GM12878 (cell line): ENCODE measurements at regions of chr12 and their contacts with region 1.

Region 1: DNA sequence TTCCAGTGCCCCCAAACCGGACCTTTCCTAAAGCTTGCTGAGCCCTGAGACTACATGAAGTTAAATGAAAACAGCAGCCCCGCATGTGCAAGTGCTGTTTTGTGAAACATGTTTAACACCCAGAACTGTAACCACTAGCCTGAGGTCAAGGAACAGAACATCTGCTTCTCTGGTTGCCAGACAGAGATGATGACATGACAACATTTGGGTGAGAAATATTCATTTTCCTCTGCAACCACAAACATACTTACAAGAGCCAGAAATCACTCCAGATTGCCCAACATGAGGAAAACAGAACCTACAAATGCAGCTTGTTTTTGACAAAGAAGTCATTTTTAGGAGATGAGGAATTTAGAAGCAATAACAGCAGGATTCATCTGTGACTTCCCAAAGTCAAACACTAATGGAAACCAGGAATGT is 110.4 kb downstream of the BCAT1 start:
- DNase-seq: peak; percentile 84
- ATAC-seq: peak; percentile 72
- H3K4me3 ChIP-seq: peak overlapping the region; percentile 8; the same call in 1 of the 2 replicates
- H3K27ac ChIP-seq: peak overlapping the region; percentile 89
- H3K4me1 ChIP-seq: peaks cover 27% of the 10 kb centered on the region
- H3K27me3 ChIP-seq: no peaks in the 10 kb centered on the region
- CTCF ChIP-seq: no peak
- EP300 ChIP-seq: peak; percentile 87 to 89; a peak in 3 of 4 replicates
- POLR2A ChIP-seq: no peak
- RAD21 ChIP-seq: 0 out of 2 replicates have a peak, but pooled peaks have one; percentile 3

Region 2: GRCh38 chr12:24127919-24128721 is 710.4 kb before region 1 on chr12:
- CTCF ChIA-PET with region 1: no interaction called
- POLR2A ChIA-PET with region 1: no interaction called
- RAD21 ChIA-PET with region 1: no interaction called
- SMC1A ChIA-PET with region 1: no interaction called
- in situ Hi-C with region 1: no loop called
- intact Hi-C with region 1: loop called (anchors 2 kb)
- DNase-seq: peak; percentile 63
- ATAC-seq: peak; percentile 96
- H3K4me3 ChIP-seq: no peak overlapping the region; the same call in 1 of the 2 replicates
- H3K27ac ChIP-seq: no peak overlapping the region
- H3K4me1 ChIP-seq: peaks cover 8% of the 10 kb centered on the region
- H3K27me3 ChIP-seq: 0 out of 4 replicates have a peak, but pooled peaks cover 0 to 2% of the 10 kb centered on the region in 2 experiments
- CTCF ChIP-seq: no peak
- EP300 ChIP-seq: peak; percentile 50 to 61; a peak in 2 of 4 replicates
- POLR2A ChIP-seq: no peak
- RAD21 ChIP-seq: no peak

Region 3: GRCh38 chr12:24596768-24597388 is 241.7 kb before region 1 on chr12:
- CTCF ChIA-PET with region 1: interaction called, 3 read pairs
- POLR2A ChIA-PET with region 1: no interaction called
- RAD21 ChIA-PET with region 1: no interaction called
- SMC1A ChIA-PET with region 1: no interaction called
- in situ Hi-C with region 1: no loop called
- intact Hi-C with region 1: loop called (anchors 5 kb)
- DNase-seq: no peak
- ATAC-seq: peak; percentile 42; the same call in 1 of the 3 replicates
- H3K4me3 ChIP-seq: no peak overlapping the region
- H3K27ac ChIP-seq: no peak overlapping the region
- H3K4me1 ChIP-seq: no peaks in the 10 kb centered on the region
- H3K27me3 ChIP-seq: no peaks in the 10 kb centered on the region
- CTCF ChIP-seq: peak; percentile 53 to 55 (median 55)
- EP300 ChIP-seq: no peak
- POLR2A ChIP-seq: no peak
- RAD21 ChIP-seq: peak; percentile 55

Region 4: DNA sequence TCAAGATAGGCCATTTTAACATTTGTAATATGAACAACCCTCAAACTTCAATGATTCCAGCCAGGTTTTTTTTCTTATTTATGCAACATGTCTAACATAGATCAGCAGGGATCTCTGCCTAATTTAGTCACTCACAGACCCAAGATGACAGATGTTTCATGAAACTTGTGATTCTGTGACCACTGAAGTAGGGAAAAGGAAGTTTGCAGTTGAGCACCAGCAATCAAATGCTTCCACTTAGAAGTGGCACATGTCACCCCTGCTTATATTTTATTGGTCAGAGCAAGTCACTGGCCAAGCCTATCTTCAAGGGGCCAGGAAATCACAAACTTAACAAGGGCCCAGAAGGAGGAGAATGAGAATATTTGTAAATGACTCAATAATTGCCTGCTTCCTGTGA is 40.2 kb before region 1 on chr12:
- CTCF ChIA-PET with region 1: interaction called, 7 read pairs
- POLR2A ChIA-PET with region 1: no interaction called
- RAD21 ChIA-PET with region 1: interaction called, 3 read pairs
- SMC1A ChIA-PET with region 1: interaction called, 5 read pairs
- in situ Hi-C with region 1: no loop called
- intact Hi-C with region 1: loop called (anchors 5 kb)
- DNase-seq: peak; percentile 73
- ATAC-seq: peak; percentile 91
- H3K4me3 ChIP-seq: no peak overlapping the region
- H3K27ac ChIP-seq: no peak overlapping the region
- H3K4me1 ChIP-seq: peaks cover 11% of the 10 kb centered on the region
- H3K27me3 ChIP-seq: no peaks in the 10 kb centered on the region
- CTCF ChIP-seq: no peak
- EP300 ChIP-seq: no peak
- POLR2A ChIP-seq: no peak
- RAD21 ChIP-seq: no peak

Region 5: DNA sequence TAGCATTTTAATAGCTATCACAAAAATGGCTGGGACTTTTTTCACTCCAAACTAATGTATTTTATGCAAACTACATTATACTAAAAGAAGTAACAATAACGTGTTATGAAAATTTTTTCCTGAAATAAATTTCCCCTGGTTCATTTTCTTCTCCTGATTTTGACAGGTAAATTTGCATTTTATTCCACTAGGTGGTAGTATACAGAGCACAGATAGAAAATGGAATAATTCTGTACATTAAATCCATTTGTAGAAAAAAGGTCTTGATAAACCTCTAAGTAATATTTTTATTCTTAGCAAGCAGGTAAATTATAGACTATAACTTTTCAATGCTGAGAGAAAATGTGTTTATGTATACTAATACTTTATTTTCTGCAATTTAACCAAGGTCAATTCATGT is 13.9 kb after region 1 on chr12:
- CTCF ChIA-PET with region 1: interaction called, 38 read pairs
- POLR2A ChIA-PET with region 1: interaction called, 3 read pairs
- RAD21 ChIA-PET with region 1: interaction called, 6 read pairs
- SMC1A ChIA-PET with region 1: interaction called, 26 read pairs
- in situ Hi-C with region 1: no loop called
- intact Hi-C with region 1: no loop called
- DNase-seq: no peak
- ATAC-seq: no peak; the same call in 2 of the 3 replicates
- H3K4me3 ChIP-seq: no peak overlapping the region
- H3K27ac ChIP-seq: no peak overlapping the region
- H3K4me1 ChIP-seq: no peaks in the 10 kb centered on the region
- H3K27me3 ChIP-seq: no peaks in the 10 kb centered on the region
- CTCF ChIP-seq: peak in 2 of 3 experiments; percentile 14 to 28; a peak in 2 of 6 replicates
- EP300 ChIP-seq: no peak
- POLR2A ChIP-seq: no peak
- RAD21 ChIP-seq: peak; percentile 46

Region 6: GRCh38 chr12:24960222-24960855 is 121.8 kb after region 1 on chr12:
- CTCF ChIA-PET with region 1: interaction called, 4 read pairs
- POLR2A ChIA-PET with region 1: interaction called, 7 read pairs
- RAD21 ChIA-PET with region 1: interaction called, 3 read pairs
- SMC1A ChIA-PET with region 1: interaction called, 12 read pairs
- in situ Hi-C with region 1: no loop called
- intact Hi-C with region 1: no loop called
- DNase-seq: peak; percentile 56
- ATAC-seq: peak; percentile 94
- H3K4me3 ChIP-seq: no peak overlapping the region
- H3K27ac ChIP-seq: no peak overlapping the region
- H3K4me1 ChIP-seq: peaks cover 7% of the 10 kb centered on the region
- H3K27me3 ChIP-seq: no peaks in the 10 kb centered on the region
- CTCF ChIP-seq: peak; percentile 75 to 85 (median 76)
- EP300 ChIP-seq: no peak
- POLR2A ChIP-seq: no peak
- RAD21 ChIP-seq: peak; percentile 77